Cardiac septum (tissue), 1 donor: ENCODE measurements at regions of chr17 and their contacts with region 1.

Region 1: DNA sequence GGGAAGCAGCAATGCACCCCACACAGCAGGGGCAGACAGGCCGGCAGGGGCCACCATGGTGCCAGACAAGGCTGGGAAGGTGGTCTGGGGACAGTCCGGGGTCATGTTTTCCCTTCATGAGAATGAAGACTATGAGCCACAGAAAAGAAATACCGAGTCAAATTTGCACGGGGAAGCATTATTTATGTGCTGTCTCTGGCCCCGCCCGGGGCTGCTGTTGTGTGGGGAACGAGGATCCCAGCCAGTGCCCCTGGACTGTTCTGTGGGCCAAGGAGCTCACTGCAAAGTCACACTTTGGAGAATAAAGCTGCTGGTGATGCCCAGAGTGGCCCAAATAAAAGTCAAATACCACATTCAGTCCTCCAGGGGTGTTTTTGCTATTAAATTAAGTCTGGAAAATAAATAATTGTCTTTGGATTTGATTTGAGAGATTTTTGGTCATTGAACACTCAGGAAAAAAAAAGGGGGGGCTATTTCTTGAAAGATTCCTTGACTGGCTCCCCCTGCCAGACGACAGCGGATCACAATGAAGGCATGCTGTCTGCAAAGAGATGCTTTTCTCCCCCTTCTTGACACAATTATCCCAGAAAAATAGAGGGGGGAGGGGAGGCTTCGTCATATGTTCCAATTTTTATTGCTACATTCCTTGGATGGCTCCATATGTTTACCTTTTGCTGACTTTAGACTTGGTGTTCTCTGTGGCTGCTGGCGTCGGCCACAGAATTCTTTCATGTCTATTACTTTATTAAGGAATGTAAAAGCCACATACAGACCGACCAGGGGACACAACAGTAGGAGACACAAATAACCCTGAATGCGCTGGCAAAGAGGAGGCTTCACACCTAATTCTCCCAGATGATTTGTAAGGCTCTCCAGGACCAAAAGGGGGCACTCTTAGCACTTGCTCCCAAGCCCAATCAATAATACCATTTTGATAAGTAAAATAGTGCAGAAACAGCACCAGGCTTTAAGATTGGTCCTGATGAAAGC is 27.1 kb upstream of the ANKFN1 start:
- DNase-seq: no peak

Region 2: GRCh38 chr17:55926276-55926990 is 199.7 kb before region 1 on chr17:
- intact Hi-C with region 1: no loop called
- DNase-seq: no peak

Region 3: DNA sequence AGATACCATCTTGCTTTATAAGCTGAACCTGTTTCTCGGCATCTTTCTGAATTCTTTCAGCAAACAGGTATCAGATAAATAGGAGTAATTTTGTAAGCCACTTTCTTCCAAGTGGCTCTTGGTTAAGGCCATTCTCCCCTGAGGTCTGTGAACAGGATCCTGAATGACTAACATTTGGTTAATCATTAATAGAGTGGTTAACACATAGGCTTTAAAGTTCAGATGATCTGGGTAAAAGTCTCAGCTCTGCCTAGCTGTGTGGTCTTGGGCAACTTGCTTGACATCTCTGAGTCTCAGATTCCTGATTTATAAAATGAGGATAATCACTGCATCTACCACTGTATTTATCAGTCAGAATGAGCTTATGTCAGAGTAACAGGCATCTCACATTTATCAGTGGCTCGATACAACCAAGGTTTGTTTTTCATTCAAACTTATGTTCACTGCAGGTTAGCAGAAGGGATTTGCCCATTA is 17.3 kb before region 1 on chr17:
- intact Hi-C with region 1: no loop called
- DNase-seq: no peak

Region 4: DNA sequence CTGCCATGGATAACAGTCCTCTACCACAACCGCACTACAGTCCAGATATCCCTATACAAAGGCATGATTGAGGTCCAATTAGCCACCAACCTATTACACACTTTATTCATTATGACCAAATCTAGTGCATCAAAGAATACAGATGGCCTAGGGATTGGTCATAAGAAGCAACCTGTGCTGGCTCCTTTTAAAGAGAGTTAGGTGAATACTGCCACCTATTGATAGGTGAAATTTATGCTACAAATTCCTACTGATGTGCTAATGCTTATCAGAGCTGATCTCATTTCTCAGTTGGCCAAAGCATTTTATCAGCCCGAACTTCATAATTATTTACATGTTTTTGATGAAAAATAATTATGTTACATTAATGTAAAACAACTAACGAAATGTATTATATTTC is 193.4 kb after region 1 on chr17:
- intact Hi-C with region 1: loop called (anchors 10 kb)
- DNase-seq: no peak

Region 5: GRCh38 chr17:56478836-56479447 is 352.8 kb after region 1 on chr17:
- intact Hi-C with region 1: loop called (anchors 5 kb)
- DNase-seq: no peak